Left ventricle myocardium inferior (tissue), 1 donor: ENCODE measurements at regions of chr4 and their contacts with region 1.

Region 1: GRCh38 chr4:22398671-22399070 is 117.2 kb downstream of the ADGRA3 start:
- DNase-seq: no peak
- H3K4me3 ChIP-seq: no peak overlapping the region
- H3K27ac ChIP-seq: no peak overlapping the region
- H3K4me1 ChIP-seq: no peaks in the 10 kb centered on the region
- H3K27me3 ChIP-seq: no peaks in the 10 kb centered on the region
- CTCF ChIP-seq: no peak

Region 2: DNA sequence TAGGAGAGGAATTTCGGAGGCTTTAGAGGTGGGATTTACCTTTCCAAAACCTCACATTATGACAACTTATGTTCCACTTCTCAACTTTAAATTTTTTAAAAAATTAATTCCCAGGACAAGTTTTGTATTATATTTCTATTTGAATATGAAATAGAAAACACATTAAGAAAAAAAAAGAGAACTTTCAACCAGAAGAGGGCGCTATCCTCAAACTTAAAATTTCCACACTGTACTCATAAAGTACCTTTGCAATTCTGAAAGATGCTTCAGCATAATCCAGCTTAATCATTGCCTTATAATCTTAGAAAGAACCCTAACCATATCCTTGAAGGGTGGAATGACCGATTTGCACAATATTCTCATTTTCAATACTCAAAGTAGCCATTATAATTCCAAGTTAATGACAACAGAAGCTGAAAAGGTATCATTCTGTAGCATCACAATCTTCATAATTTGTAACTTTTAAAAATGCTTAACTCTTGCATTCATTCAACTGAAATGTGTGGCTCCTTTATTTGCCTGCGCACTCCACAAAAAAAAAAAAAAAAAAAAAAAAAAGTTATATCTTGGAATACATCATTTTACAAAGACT is 608.1 kb before region 1 on chr4:
- intact Hi-C with region 1: loop called (anchors 5 kb)
- DNase-seq: no peak
- H3K4me3 ChIP-seq: no peak overlapping the region
- H3K27ac ChIP-seq: no peak overlapping the region
- H3K4me1 ChIP-seq: no peaks in the 10 kb centered on the region
- H3K27me3 ChIP-seq: no peaks in the 10 kb centered on the region
- CTCF ChIP-seq: peak; percentile 56

Region 3: GRCh38 chr4:22987870-22988269 is 589.2 kb after region 1 on chr4:
- intact Hi-C with region 1: no loop called
- DNase-seq: no peak
- H3K4me3 ChIP-seq: no peak overlapping the region
- H3K27ac ChIP-seq: no peak overlapping the region
- H3K4me1 ChIP-seq: no peaks in the 10 kb centered on the region
- H3K27me3 ChIP-seq: no peaks in the 10 kb centered on the region
- CTCF ChIP-seq: no peak